ENCODE measurements at regions of chr13 and their contacts with region 1.

Region 1: GRCh38 chr13:90362707-90363106 is 984.8 kb upstream of the MIR17HG start:
- DNase-seq: no peak
- H3K4me3 Mint-ChIP-seq: no peak overlapping the region
- H3K27ac Mint-ChIP-seq: no peak overlapping the region
- H3K4me1 Mint-ChIP-seq: no peaks in the 10 kb centered on the region
- H3K27me3 Mint-ChIP-seq: no peaks in the 10 kb centered on the region

Region 2: DNA sequence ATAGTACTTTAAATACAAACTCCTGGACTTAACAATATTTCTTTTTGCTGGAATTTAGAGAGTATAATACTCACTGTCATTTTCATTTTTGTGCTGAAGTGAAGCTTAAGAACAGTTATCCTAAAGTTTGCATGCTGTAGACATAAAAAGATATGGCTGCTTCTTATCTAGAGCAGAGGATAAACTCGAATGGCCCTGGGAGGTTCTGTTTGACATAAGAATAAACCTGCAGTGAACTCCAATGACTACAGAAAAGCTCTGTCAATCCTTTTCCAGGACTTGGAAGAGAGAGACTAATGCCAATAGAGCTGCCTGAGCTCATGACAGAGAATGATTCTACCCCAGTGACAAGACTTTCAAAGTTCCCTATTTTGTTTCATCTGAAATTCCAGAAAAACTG is 33.1 kb before region 1 on chr13:
- intact Hi-C with region 1: no loop called
- DNase-seq: no peak
- H3K4me3 Mint-ChIP-seq: no peak overlapping the region
- H3K27ac Mint-ChIP-seq: no peak overlapping the region
- H3K4me1 Mint-ChIP-seq: no peaks in the 10 kb centered on the region
- H3K27me3 Mint-ChIP-seq: no peaks in the 10 kb centered on the region

Region 3: GRCh38 chr13:90403330-90404082 is 40.8 kb after region 1 on chr13:
- intact Hi-C with region 1: loop called (anchors 1 kb)
- DNase-seq: no peak
- H3K4me3 Mint-ChIP-seq: no peak overlapping the region
- H3K27ac Mint-ChIP-seq: no peak overlapping the region
- H3K4me1 Mint-ChIP-seq: no peaks in the 10 kb centered on the region
- H3K27me3 Mint-ChIP-seq: no peaks in the 10 kb centered on the region

Measured in activated T-helper 1 cell treated with anti-CD3 and anti-CD28 coated beads, Interleukin-12 subunit alpha, Interleukin-12 subunit beta, Interleukin-2, Interleukin-4 antibody, amounts not matched to agents 30 ng/mL and 10 ng/mL and 1 ng/mL, durations not matched to agents 14 hours and 24 hours and 36 hours (primary cell).